ENCODE measurements at regions of chr14 and their contacts with region 1.

Region 1: DNA sequence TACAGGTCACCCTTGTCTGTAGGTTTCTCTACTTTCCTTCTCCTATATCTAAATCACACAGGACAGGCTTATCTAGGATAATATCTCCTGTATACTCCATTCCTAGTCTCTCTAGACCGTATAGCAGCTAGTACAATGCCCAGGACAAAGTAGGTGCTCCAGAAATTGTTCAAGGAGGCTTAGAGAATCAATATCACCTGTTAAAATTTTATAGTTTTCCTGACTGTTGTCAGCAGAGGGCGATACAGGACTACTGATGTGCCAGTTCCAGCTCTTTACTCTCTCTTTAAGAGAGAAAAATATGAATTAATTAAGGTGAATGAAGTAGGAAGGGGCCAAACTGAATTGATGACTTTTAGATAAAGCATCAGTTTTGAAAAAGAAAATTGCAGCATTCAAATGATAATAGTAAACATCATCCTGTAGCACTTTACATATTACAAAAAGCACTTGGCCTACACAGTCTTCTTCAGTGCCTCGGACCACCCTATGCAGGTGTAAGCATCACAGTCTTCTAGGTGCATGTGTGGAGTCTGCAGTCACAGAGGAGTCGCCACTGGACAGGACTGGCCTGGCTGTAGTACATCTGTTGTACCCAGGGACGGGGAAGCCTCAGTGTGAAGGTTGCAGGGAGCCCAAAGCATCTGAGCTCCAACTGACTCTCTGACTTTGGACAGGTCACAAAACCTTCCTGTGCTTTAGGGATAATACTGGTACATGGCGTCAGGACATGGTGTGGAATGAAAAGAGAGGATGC is 61.9 kb upstream of the MAX start:
- DNase-seq: no peak
- H3K4me3 ChIP-seq: no peak overlapping the region
- CTCF ChIP-seq: peak; percentile 22

Region 2: GRCh38 chr14:65177551-65177950 is 13.3 kb after region 1 on chr14:
- CTCF ChIA-PET with region 1: interaction called, 14 read pairs
- POLR2A ChIA-PET with region 1: no interaction called
- DNase-seq: no peak
- H3K4me3 ChIP-seq: no peak overlapping the region
- CTCF ChIP-seq: no peak

Region 3: DNA sequence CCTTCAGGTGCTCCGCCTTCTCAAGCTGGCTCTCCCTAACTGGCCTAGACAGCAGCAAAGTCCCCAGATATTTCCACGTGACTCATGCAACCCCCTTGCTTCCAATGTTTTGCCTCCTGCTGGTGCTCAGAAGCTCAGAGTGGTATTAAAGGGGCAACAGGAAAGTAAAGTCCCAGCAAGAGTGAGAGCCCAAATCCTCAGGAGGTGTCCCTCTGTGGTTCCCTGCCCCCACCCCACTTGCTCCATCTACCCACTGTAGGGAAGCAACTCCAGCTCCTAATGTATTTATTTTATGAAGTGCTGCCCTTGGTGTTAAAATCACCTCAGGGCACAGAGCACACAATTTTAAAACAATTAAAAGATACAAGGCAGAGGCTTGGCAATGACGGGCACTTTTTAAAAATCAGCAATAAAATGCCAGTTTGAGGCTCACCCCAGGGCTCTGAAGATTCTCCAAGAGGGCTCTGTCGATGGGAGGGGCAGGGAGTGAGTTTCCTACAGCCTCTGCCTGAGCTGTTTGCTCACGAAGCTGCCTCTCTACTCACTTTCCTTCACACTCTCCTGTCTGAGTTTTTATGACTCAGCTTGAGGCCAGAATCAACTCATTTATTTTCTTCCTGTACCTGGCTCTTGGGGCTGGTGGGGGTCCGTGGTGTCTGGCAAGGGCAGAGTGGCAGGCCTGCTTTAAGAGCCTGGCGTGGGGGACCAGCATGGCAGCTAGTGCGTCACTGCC is 20.0 kb after region 1 on chr14:
- CTCF ChIA-PET with region 1: interaction called, 17 read pairs
- POLR2A ChIA-PET with region 1: no interaction called
- DNase-seq: no peak
- H3K4me3 ChIP-seq: no peak overlapping the region
- CTCF ChIP-seq: no peak

Region 4: GRCh38 chr14:65373679-65374039 is 209.4 kb after region 1 on chr14:
- CTCF ChIA-PET with region 1: interaction called, 10 read pairs
- POLR2A ChIA-PET with region 1: no interaction called
- DNase-seq: no peak
- H3K4me3 ChIP-seq: no peak overlapping the region
- CTCF ChIP-seq: no peak

Measured in AG04449 (cell line).